Posterior cingulate gyrus (tissue), 11 donors: ENCODE measurements at regions of chr5 and their contacts with region 1.

Region 1: DNA sequence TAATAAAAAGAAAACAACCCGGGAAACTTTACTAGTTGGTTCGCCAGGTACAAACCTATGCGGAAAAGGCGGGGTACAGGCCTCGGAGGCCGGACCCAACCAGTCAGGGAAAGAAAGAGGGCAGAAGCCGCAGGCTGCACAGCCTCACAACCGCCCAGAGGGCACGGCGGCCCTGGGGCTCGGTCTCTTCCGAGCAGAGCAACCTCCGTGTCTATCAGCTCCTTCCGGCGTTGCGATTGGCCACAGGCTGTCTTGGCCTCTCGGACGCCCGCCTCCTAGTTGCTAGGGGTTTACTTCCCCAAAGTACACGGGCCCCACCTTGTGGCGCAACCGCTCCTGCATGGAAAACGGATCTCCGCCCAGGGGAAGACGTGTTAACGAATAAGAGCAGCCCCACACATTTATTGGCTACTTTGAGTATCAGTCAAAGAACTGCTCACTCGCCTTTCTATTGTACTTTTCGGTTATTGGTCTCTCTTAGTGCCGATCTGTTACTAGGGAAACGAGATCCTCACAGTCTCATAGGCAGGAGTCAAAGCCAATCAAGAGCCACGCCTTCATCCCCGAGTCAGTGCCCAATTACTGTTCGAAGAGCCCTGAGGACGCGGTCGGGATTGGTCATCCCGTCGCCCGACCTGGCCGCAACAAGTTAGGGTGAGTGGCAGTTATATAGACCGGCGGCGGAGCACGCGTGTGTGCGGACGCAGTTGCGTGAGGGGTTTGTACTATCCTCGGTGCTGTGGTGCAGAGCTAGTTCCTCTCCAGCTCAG is at the start of gene G3BP1:
- DNase-seq: peak; percentile 99 to 100 (median 100)

Region 2: DNA sequence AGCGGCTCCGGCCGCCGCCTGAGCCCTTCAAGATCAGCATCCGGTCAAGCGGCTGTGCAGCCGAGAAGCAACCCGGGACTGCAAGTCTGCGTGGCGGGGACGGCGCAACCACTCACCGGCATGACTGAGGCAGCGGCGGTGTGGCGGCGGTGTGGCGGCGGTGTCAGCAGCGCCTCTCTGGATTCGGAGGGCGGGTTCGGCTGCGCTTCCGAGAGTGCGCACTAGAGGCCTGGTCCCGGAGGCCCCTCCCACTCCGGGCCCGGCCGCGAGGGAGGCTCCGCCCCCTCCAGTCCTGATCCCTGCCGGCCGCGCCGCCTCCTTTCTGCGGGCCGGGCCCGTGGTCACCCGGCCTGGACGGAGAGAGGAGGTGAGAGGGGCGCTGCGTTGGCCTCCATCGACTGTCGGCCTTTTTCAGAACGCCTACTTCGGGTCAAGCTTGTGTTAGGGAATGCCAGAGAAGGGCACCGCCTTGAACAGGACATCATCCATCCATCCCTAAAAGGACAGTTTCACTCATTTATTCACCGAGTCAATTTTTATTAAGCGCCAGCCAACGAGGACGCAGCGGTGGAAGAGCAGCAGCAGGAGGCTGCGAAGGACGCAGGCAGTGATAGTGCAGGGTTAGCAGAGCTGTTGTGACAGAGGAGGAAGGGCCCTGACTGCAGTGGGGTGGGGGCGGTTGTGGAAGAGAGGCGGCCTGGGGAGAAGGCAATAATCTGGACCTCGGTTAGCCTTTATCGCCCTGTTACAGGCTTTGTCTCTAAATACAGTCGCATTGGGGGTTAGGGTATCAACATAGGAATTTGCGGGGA is 12.8 kb before region 1 on chr5 and contains the start of gene ATOX1:
- intact Hi-C with region 1: loop called (anchors 1 kb)
- DNase-seq: peak; percentile 87 to 99 (median 94)

Region 3: GRCh38 chr5:152288499-152288898 is 517.1 kb after region 1 on chr5:
- intact Hi-C with region 1: no loop called
- DNase-seq: peak in 4 of 10 donors; percentile 5 to 80 (median 32)